ENCODE measurements at regions of chr5 and their contacts with region 1.

Region 1: GRCh38 chr5:35926389-35927051 is 11.9 kb downstream of the CAPSL start:
- DNase-seq: peak in 33 of 35 experiments; percentile 14 to 84 (median 51)
- ATAC-seq: peak; percentile 34 to 52 (median 42)
- H3K4me3 ChIP-seq: no peak overlapping the region
- H3K4me3 Mint-ChIP-seq: peak overlapping the region; percentile 50 to 79 (median 54)
- H3K27ac ChIP-seq: no peak overlapping the region
- H3K27ac Mint-ChIP-seq: peak overlapping the region in 1 of 2 donors; percentile 34
- H3K4me1 ChIP-seq: peaks cover 8 to 25% of the 10 kb centered on the region in 2 experiments
- H3K4me1 Mint-ChIP-seq: peaks cover 31 to 41% (median 40%) of the 10 kb centered on the region in 3 donors
- H3K27me3 ChIP-seq: peaks cover 0 to 3% of the 10 kb centered on the region in 2 experiments
- H3K27me3 Mint-ChIP-seq: peaks cover 0 to 7% of the 10 kb centered on the region in 2 donors

Region 2: GRCh38 chr5:35575578-35575977 is 350.9 kb before region 1 on chr5:
- CTCF ChIA-PET with region 1: interaction called in 1 of 2 experiments, 10 read pairs
- POLR2A ChIA-PET with region 1: no interaction called
- DNase-seq: no peak
- ATAC-seq: no peak
- H3K4me3 ChIP-seq: no peak overlapping the region
- H3K4me3 Mint-ChIP-seq: no peak overlapping the region
- H3K27ac ChIP-seq: no peak overlapping the region
- H3K27ac Mint-ChIP-seq: no peak overlapping the region
- H3K4me1 ChIP-seq: no peaks in the 10 kb centered on the region
- H3K4me1 Mint-ChIP-seq: no peaks in the 10 kb centered on the region
- H3K27me3 ChIP-seq: peaks cover 0 to 3% of the 10 kb centered on the region in 2 experiments
- H3K27me3 Mint-ChIP-seq: peaks cover 13 to 18% of the 10 kb centered on the region in 2 donors

Region 3: DNA sequence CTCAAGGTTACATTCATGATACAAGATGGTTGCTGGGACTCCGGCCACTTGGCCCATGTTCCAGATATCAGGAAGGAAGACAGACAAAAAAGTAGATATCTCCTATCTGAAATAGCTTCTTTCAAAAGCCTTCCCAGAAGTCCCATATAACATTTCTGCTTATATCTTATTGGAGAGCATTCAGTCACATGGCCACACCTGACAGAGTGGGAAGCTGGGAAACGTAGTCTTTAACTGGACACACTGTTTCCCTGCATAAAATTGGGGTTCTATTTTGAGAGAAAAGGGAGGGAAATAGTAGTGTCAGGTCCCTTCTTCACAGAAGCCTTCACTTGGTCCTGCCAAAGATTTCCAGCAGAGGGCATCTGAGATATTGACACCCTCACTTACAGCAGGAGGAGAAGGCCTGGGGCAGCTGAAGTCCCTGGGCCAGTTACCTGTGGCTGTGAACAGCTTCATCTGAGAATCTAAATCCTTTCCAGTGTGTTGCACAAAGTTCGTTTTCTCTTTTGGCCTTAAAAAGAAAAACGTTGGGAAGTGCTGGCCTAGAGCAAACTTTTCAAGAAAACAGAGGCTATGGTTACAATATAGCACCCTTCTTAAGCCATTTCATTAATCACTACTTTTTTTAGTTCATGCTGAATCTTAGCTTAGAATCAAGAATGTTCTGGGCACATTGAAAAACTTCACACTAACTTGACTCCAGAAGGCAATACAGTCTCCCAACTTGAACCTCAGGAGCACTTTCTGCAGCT is 275.3 kb before region 1 on chr5:
- CTCF ChIA-PET with region 1: interaction called, 90 to 129 read pairs
- POLR2A ChIA-PET with region 1: interaction called in 1 of 2 experiments, 6 read pairs
- DNase-seq: peak; percentile 15 to 79 (median 58)
- ATAC-seq: peak; percentile 86 to 96 (median 94)
- H3K4me3 ChIP-seq: no peak overlapping the region
- H3K4me3 Mint-ChIP-seq: no peak overlapping the region
- H3K27ac ChIP-seq: no peak overlapping the region
- H3K27ac Mint-ChIP-seq: peak overlapping the region; percentile 45 to 66
- H3K4me1 ChIP-seq: peaks cover 0 to 4% of the 10 kb centered on the region in 2 experiments
- H3K4me1 Mint-ChIP-seq: peaks cover 6 to 9% (median 8%) of the 10 kb centered on the region in 3 donors
- H3K27me3 ChIP-seq: no peaks in the 10 kb centered on the region
- H3K27me3 Mint-ChIP-seq: no peaks in the 10 kb centered on the region

Region 4: GRCh38 chr5:35672995-35673394 is 253.5 kb before region 1 on chr5:
- CTCF ChIA-PET with region 1: interaction called, 4 to 11 read pairs
- POLR2A ChIA-PET with region 1: interaction called in 1 of 2 experiments, 4 read pairs
- DNase-seq: peak in 32 of 35 experiments; percentile 1 to 51 (median 18)
- ATAC-seq: peak; percentile 26 to 84 (median 42)
- H3K4me3 ChIP-seq: peak overlapping the region in 1 of 2 donors; percentile 38
- H3K4me3 Mint-ChIP-seq: peak overlapping the region in 1 of 3 donors; percentile 69
- H3K27ac ChIP-seq: peak overlapping the region; percentile 67
- H3K27ac Mint-ChIP-seq: peak overlapping the region; percentile 90 to 92
- H3K4me1 ChIP-seq: peaks cover 8 to 59% of the 10 kb centered on the region in 2 experiments
- H3K4me1 Mint-ChIP-seq: peaks cover 57 to 76% (median 60%) of the 10 kb centered on the region in 3 donors
- H3K27me3 ChIP-seq: no peaks in the 10 kb centered on the region
- H3K27me3 Mint-ChIP-seq: no peaks in the 10 kb centered on the region

Region 5: GRCh38 chr5:35822511-35822910 is 104.0 kb before region 1 on chr5:
- CTCF ChIA-PET with region 1: interaction called, 3 to 11 read pairs
- POLR2A ChIA-PET with region 1: no interaction called
- DNase-seq: peak; percentile 34 to 87 (median 63)
- ATAC-seq: peak; percentile 81 to 86 (median 85)
- H3K4me3 ChIP-seq: peak overlapping the region; percentile 4 to 40
- H3K4me3 Mint-ChIP-seq: peak overlapping the region; percentile 55 to 69 (median 65)
- H3K27ac ChIP-seq: peak overlapping the region; percentile 79
- H3K27ac Mint-ChIP-seq: peak overlapping the region; percentile 97 to 99
- H3K4me1 ChIP-seq: peaks cover 78 to 87% of the 10 kb centered on the region in 2 experiments
- H3K4me1 Mint-ChIP-seq: peaks cover 88 to 91% (median 89%) of the 10 kb centered on the region in 3 donors
- H3K27me3 ChIP-seq: no peaks in the 10 kb centered on the region
- H3K27me3 Mint-ChIP-seq: no peaks in the 10 kb centered on the region

Region 6: DNA sequence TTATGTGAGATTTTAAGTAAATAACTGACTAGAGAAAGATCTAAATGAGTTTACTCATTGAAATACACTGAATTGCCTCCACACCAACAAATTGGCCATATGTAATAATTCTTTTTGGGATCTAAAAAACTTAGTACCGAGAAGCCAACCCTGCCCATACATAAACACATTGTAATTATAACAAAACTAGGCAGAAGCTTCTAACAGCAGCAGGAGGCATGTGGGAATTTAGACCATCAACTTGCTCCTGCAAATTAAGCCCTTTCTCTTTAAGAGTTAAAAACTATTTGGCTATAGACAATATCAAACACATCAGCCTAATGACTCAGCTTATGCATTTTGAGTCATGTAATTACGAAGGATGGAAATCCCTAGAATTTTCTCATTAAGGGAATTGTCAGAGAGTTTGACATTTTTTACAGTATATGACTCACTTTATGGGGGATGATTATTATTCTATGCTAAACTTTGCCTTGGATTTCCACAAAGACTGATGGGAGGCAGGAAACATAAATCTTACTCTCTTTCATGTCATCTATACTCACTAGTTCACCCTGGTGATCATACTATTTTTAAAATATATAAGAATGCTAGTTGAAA is 68.8 kb before region 1 on chr5:
- CTCF ChIA-PET with region 1: interaction called, 5 to 13 read pairs
- POLR2A ChIA-PET with region 1: interaction called, 5 to 14 read pairs
- DNase-seq: no peak
- ATAC-seq: no peak
- H3K4me3 ChIP-seq: peak overlapping the region; percentile 83 to 94
- H3K4me3 Mint-ChIP-seq: peak overlapping the region; percentile 92 to 97 (median 92)
- H3K27ac ChIP-seq: peak overlapping the region; percentile 99
- H3K27ac Mint-ChIP-seq: peak overlapping the region; percentile 99 to 100
- H3K4me1 ChIP-seq: peaks cover 36 to 49% of the 10 kb centered on the region in 2 experiments
- H3K4me1 Mint-ChIP-seq: peaks cover 52 to 76% (median 68%) of the 10 kb centered on the region in 3 donors
- H3K27me3 ChIP-seq: no peaks in the 10 kb centered on the region
- H3K27me3 Mint-ChIP-seq: no peaks in the 10 kb centered on the region

Region 7: GRCh38 chr5:36651761-36652685 is 725.5 kb after region 1 on chr5:
- CTCF ChIA-PET with region 1: no interaction called
- POLR2A ChIA-PET with region 1: no interaction called
- DNase-seq: no peak
- ATAC-seq: no peak
- H3K4me3 ChIP-seq: no peak overlapping the region
- H3K4me3 Mint-ChIP-seq: no peak overlapping the region
- H3K27ac ChIP-seq: no peak overlapping the region
- H3K27ac Mint-ChIP-seq: no peak overlapping the region
- H3K4me1 ChIP-seq: no peaks in the 10 kb centered on the region
- H3K4me1 Mint-ChIP-seq: no peaks in the 10 kb centered on the region
- H3K27me3 ChIP-seq: no peaks in the 10 kb centered on the region
- H3K27me3 Mint-ChIP-seq: peaks cover 18 to 19% of the 10 kb centered on the region in 2 donors

Measured in T-cell (primary cell).